Breast epithelium (tissue), 4 donors: ENCODE measurements at regions of chr1 and their contacts with region 1.

Region 1: GRCh38 chr1:212368073-212368484 is 46.6 kb downstream of the PACC1 start:
- DNase-seq: no peak
- H3K4me3 ChIP-seq: no peak overlapping the region
- H3K27ac ChIP-seq: no peak overlapping the region
- H3K4me1 ChIP-seq: no peaks in the 10 kb centered on the region
- H3K27me3 ChIP-seq: no peaks in the 10 kb centered on the region
- CTCF ChIP-seq: peak; percentile 33 to 83 (median 76)
- POLR2A ChIP-seq: no peak

Region 2: GRCh38 chr1:212315907-212316306 is 52.2 kb before region 1 on chr1:
- intact Hi-C with region 1: loop called (anchors 10 kb)
- DNase-seq: no peak
- H3K4me3 ChIP-seq: no peak overlapping the region
- H3K27ac ChIP-seq: no peak overlapping the region
- H3K4me1 ChIP-seq: no peaks in the 10 kb centered on the region
- H3K27me3 ChIP-seq: no peaks in the 10 kb centered on the region
- CTCF ChIP-seq: no peak
- POLR2A ChIP-seq: no peak

Region 3: GRCh38 chr1:212452323-212453177 is 84.5 kb after region 1 on chr1:
- intact Hi-C with region 1: no loop called
- DNase-seq: no peak
- H3K4me3 ChIP-seq: no peak overlapping the region
- H3K27ac ChIP-seq: peak overlapping the region in 1 of 2 donors; percentile 38
- H3K4me1 ChIP-seq: no peaks in the 10 kb centered on the region
- H3K27me3 ChIP-seq: no peaks in the 10 kb centered on the region
- CTCF ChIP-seq: no peak
- POLR2A ChIP-seq: no peak